ENCODE measurements at regions of chr17 and their contacts with region 1.

Region 1: GRCh38 chr17:49899191-49899485 is 51.3 kb upstream of the TAC4 start:
- DNase-seq: peak in 1 of 2 experiments; percentile 70
- H3K4me3 ChIP-seq: no peak overlapping the region
- H3K27ac ChIP-seq: no peak overlapping the region
- H3K4me1 ChIP-seq: peaks cover 4 to 19% (median 14%) of the 10 kb centered on the region in 4 experiments
- H3K27me3 ChIP-seq: peaks cover 5 to 33% (median 32%) of the 10 kb centered on the region in 4 experiments
- CTCF ChIP-seq: peak; percentile 39 to 80 (median 64)
- EP300 ChIP-seq: no peak
- POLR2A ChIP-seq: no peak
- RAD21 ChIP-seq: peak; percentile 63 to 79

Region 2: GRCh38 chr17:49887086-49888028 is 11.8 kb before region 1 on chr17:
- CTCF ChIA-PET with region 1: interaction called, 10 read pairs
- POLR2A ChIA-PET with region 1: interaction called, 8 read pairs
- DNase-seq: no peak
- H3K4me3 ChIP-seq: peak overlapping the region in 1 of 4 experiments; percentile 2; a peak in 1 of 8 replicates
- H3K27ac ChIP-seq: no peak overlapping the region
- H3K4me1 ChIP-seq: peaks cover 4 to 16% (median 13%) of the 10 kb centered on the region in 4 experiments
- H3K27me3 ChIP-seq: peaks cover 3 to 26% (median 20%) of the 10 kb centered on the region in 4 experiments
- CTCF ChIP-seq: no peak
- EP300 ChIP-seq: no peak
- POLR2A ChIP-seq: no peak
- RAD21 ChIP-seq: no peak; a peak in 1 of 4 replicates